ENCODE measurements at regions of chr15 and their contacts with region 1.

Region 1: GRCh38 chr15:37446921-37447320 is 346.6 kb upstream of the MEIS2 start:
- DNase-seq: no peak
- ATAC-seq: no peak
- H3K4me3 ChIP-seq: no peak overlapping the region
- H3K27ac ChIP-seq: no peak overlapping the region
- H3K4me1 ChIP-seq: no peaks in the 10 kb centered on the region
- H3K27me3 ChIP-seq: no peaks in the 10 kb centered on the region
- CTCF ChIP-seq: no peak
- POLR2A ChIP-seq: no peak

Region 2: DNA sequence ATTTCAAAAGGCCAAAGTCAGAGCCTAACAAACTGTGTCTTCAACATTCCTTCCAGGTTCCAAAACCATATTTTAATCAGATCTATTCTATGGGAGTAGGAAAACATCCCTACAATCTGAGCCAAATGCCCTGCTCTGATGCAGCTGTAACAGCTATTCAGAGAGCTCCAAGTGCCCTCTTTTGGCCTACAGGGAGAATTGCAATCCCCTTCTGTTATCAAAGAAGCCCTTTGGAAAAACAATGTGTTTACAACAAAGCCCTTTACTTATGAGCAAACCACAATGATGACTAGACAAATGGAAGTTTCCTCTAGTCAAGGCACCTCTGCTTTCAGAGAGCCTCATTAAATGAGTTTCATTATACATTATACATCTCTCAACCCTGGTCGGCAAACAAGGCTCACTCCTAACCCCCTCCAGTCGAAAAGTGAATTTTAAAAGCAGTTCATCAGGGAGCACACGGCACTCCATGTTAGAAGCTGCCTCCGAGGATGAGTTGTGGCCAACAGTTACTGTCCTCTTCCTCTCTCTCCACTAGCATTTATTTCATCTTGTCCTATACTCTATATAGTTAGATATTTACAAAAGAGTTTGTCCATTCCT is 444.9 kb after region 1 on chr15:
- in situ Hi-C with region 1: no loop called
- intact Hi-C with region 1: loop called (anchors 5 kb)
- DNase-seq: no peak
- ATAC-seq: no peak
- H3K4me3 ChIP-seq: no peak overlapping the region
- H3K27ac ChIP-seq: no peak overlapping the region
- H3K4me1 ChIP-seq: no peaks in the 10 kb centered on the region
- H3K27me3 ChIP-seq: no peaks in the 10 kb centered on the region
- CTCF ChIP-seq: peak in 3 of 5 experiments; percentile 35 to 58 (median 35)
- POLR2A ChIP-seq: no peak

Measured in gastrocnemius medialis (tissue), 4 donors.